ENCODE measurements at regions of chr7 and their contacts with region 1.

Region 1: DNA sequence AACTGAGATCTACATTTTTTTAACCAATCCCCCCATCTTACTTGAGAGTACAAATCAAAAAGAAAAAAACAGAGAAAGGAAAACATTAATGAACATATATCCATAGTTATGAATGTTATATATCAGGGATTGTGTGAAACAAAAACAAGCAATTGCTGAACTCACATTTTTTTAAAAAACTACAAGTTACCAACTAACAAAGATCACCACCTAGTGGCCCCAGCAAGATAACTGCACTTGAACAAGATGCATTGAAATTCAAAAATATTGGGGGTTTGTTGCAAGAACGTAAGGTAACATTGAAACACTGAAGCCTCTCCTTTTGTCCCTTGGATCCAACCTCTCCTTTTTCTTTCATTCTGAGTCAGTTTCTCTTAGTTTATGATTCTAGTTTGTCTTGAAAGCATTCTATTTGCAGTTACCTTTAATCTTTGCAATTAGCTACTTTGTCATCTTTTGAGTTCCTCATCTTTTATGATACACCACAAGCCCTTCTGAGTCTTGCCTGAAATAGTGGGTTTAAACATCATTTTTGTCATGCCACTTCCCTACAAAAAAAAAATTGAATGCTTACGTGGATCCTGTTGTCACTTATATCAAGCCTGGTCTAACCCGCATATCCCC is 87.3 kb upstream of the TES start:
- DNase-seq: peak; percentile 22
- H3K4me3 Mint-ChIP-seq: no peak overlapping the region
- H3K27ac Mint-ChIP-seq: no peak overlapping the region
- H3K4me1 Mint-ChIP-seq: no peaks in the 10 kb centered on the region
- H3K27me3 Mint-ChIP-seq: no peaks in the 10 kb centered on the region
- CTCF ChIP-seq: peak; percentile 72

Region 2: GRCh38 chr7:115822380-115822779 is 300.7 kb before region 1 on chr7:
- CTCF ChIA-PET with region 1: no interaction called
- intact Hi-C with region 1: no loop called
- DNase-seq: no peak
- H3K4me3 Mint-ChIP-seq: no peak overlapping the region
- H3K27ac Mint-ChIP-seq: no peak overlapping the region
- H3K4me1 Mint-ChIP-seq: no peaks in the 10 kb centered on the region
- H3K27me3 Mint-ChIP-seq: no peaks in the 10 kb centered on the region
- CTCF ChIP-seq: no peak

Region 3: GRCh38 chr7:115910541-115911164 is 212.4 kb before region 1 on chr7:
- CTCF ChIA-PET with region 1: no interaction called
- intact Hi-C with region 1: loop called (anchors 1 kb)
- DNase-seq: no peak
- H3K4me3 Mint-ChIP-seq: no peak overlapping the region
- H3K27ac Mint-ChIP-seq: no peak overlapping the region
- H3K4me1 Mint-ChIP-seq: peaks cover 5% of the 10 kb centered on the region
- H3K27me3 Mint-ChIP-seq: no peaks in the 10 kb centered on the region
- CTCF ChIP-seq: peak; percentile 46

Region 4: GRCh38 chr7:115965796-115966475 is 157.1 kb before region 1 on chr7:
- CTCF ChIA-PET with region 1: no interaction called
- intact Hi-C with region 1: loop called (anchors 10 kb)
- DNase-seq: no peak
- H3K4me3 Mint-ChIP-seq: no peak overlapping the region
- H3K27ac Mint-ChIP-seq: no peak overlapping the region
- H3K4me1 Mint-ChIP-seq: no peaks in the 10 kb centered on the region
- H3K27me3 Mint-ChIP-seq: no peaks in the 10 kb centered on the region
- CTCF ChIP-seq: no peak

Region 5: DNA sequence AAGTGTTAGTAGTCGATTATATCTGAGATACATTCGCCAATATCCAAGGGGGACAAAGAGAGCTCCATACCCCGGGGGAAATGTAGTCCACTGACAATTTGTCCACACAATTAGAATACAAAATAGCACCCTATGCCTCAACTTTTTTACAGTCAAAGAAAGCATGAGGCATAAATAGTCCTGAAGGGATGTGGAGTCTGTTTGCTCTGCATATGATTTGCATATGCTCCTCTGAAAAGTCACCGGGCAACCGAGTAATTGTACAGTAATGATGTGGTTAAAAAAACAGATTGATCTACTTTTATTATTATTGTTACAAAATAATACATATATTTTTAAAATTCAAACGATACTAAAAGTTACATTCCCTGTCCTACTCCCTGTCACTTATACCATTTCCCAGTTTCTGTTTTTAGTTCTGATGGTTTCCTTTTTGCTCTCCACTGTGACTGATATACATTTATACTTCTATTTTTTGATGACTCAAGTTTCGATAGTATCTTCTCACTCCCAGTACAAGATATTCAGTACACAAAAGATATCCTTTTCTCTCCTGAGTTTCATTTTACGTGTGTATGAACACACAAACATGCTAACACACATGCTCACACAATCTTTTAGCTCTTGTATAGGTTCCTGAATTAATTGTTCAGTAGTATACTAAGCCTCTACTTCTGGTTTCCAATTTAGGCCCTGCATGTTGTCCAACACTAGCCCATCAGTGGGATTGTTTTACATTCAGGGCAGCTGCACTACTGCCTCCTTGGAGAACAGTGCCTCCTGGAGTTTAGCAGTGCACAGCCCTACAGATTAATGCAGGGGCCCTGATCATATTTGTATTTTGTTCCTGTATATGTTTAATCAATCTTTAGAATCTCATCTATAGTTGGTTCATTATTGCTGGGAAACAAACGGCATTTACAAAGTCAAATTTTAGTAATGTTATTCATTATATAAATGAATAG is 218.1 kb after region 1 on chr7:
- CTCF ChIA-PET with region 1: no interaction called
- intact Hi-C with region 1: no loop called
- DNase-seq: no peak
- H3K4me3 Mint-ChIP-seq: no peak overlapping the region
- H3K27ac Mint-ChIP-seq: no peak overlapping the region
- H3K4me1 Mint-ChIP-seq: peaks cover 30% of the 10 kb centered on the region
- H3K27me3 Mint-ChIP-seq: no peaks in the 10 kb centered on the region
- CTCF ChIP-seq: no peak

Measured in Calu3 (cell line).